ENCODE measurements at regions of chr3 and their contacts with region 1.

Region 1: GRCh38 chr3:14124615-14125190 is at the starts of genes CHCHD4 and TMEM43:
- DNase-seq: peak; percentile 95 to 100 (median 100)

Region 2: GRCh38 chr3:13895155-13896105 is 229.3 kb before region 1 on chr3:
- intact Hi-C with region 1: loop called (anchors 5 kb)
- DNase-seq: peak; percentile 79 to 98 (median 94)

Region 3: GRCh38 chr3:14178247-14179113 is 53.8 kb after region 1 on chr3 and contains the starts of genes LSM3 and XPC:
- intact Hi-C with region 1: loop called (anchors 2 kb)
- DNase-seq: peak; percentile 95 to 99 (median 98)

Region 4: DNA sequence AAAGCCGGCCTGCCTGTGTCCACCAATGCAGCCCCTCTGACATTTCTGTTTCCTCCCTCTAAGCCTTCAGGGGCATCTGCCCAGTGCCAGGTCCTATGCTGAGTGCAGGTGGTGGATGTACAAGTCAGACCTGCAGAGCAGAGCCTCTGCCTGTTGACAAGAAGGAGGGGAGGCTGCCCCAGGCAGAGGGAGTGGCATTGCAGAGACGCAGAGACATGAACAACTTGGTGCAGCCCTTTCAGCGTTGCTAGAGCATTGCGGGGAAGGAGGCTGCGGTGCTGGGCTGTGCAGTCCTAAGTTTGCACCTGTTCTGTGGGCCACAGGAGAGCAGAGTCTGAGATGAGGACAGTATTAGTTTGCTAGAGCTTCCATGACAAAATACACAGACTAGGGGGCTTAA is 119.1 kb after region 1 on chr3:
- intact Hi-C with region 1: no loop called
- DNase-seq: no peak

Region 5: GRCh38 chr3:14312371-14312770 is 187.7 kb after region 1 on chr3:
- intact Hi-C with region 1: no loop called
- DNase-seq: no peak

Region 6: DNA sequence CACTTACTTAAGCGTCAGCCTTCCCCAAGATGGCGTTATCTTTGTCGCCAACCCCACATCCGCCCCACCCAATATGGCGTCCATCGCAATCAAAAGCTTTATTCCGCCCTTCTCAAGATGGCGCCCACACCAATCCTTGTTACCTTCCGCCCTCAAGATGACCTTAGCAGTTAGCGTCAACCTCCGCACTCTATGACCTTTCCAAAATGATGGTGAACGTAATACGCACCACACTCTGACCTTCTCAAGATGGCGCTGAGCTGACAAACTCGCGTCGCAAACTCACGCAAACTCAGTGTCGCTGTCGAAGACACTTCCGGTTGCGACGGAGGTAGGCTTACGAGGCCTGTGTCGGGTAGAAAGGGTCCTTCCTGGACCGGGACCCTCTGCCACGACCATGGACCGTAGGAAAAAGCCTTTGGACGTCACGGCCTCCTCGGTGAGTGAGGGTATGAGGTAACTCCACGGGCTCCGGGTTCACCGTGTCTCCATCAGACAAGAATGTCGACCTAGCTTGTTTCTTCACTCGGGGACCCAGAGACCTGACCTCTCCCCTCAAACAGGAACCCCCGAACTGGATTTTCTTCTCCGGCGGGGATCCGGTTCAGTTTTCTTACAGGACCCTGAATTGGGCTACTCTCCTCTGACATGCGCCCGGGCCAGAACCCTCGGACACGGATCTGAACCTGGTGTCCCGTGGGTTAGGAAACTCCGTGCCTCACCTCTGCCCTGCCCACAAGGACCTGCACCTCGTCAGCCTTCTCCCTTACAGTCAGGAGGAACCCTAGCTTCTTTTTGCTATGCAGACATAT is 526.9 kb after region 1 on chr3 and contains the start of gene CCDC174:
- intact Hi-C with region 1: loop called (anchors 10 kb)
- DNase-seq: peak; percentile 85 to 99 (median 96)

Measured in head of caudate nucleus (tissue), 42 donors.